Calu3 (cell line): ENCODE measurements at regions of chr1 and their contacts with region 1.

Region 1: DNA sequence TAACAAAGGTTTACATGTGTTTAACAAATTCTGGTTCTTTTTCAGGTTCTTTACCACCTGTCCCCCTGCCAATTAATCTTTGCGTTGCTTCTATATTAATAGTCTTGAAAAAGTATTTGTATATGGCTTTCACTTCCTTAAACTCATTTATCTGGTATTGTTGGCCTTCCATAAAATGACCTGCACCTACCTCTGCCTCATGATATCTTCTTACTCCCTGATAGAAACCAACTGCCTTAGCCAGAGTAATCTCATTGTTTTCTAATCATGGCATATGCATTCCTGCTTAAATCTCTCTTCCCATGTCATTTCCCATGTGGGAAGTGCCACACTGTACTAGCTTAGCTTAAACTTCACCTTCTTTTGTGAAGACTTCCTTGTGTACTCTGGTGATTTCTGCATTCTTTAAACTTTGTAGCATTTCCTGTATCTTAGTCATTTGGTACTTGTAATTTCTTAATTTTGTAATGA is 8.7 kb downstream of the SMG7 start:
- DNase-seq: no peak
- H3K4me3 Mint-ChIP-seq: peak overlapping the region; percentile 48
- H3K27ac Mint-ChIP-seq: peak overlapping the region; percentile 66
- H3K4me1 Mint-ChIP-seq: peaks cover 56% of the 10 kb centered on the region
- H3K27me3 Mint-ChIP-seq: no peaks in the 10 kb centered on the region
- CTCF ChIP-seq: no peak

Region 2: DNA sequence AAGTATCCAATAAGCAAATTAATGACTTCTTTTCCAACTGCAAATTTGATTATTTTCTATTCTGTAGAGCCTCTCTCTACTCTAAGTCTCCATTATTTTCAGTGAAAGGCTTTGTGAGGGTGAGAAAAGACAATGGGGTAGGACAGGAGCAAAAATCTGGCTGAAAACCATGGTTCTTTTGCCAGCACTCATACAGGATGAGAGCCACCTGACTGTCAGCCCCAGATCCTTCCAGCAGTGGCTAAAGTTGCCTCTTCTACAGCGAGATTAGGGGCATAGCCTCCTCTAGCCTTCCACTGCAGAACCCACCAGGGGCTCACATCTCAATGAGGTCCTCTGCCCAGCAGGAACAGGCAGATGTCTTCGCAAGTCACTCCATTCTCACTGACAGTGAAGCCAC is 86.6 kb before region 1 on chr1:
- CTCF ChIA-PET with region 1: no interaction called
- intact Hi-C with region 1: no loop called
- DNase-seq: no peak
- H3K4me3 Mint-ChIP-seq: no peak overlapping the region
- H3K27ac Mint-ChIP-seq: no peak overlapping the region
- H3K4me1 Mint-ChIP-seq: peaks cover 12% of the 10 kb centered on the region
- H3K27me3 Mint-ChIP-seq: peaks cover 52% of the 10 kb centered on the region
- CTCF ChIP-seq: no peak

Region 3: DNA sequence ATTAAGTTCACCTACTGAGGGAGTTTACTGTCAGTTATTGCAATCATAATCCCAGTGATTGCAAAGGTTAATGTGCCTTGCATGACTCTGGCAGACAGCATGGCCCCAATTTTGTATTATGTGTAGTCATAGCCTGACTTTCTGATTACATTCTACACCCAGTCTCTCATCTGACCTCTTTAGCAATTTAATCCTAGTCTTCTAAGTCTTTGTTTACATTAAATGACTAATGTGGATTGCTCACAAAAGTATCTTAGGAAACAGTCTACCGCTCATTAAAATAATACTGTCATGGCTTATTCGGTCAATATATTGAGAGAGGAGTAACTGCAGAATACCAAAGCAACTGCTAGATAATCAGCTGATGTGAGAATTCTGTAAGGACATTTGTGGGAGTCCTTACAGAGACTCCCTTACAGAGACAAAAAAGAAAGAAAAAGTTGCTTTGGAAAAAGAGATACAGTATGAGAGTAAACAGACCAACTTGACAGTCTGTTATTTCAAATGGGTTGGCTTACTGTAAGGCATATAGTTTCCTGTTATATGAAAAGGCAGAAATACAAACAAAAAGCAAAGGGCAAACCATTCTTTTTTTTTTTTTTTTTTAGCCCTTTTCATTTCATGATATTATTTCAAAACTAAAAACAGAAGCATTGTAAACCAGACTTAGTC is 34.1 kb after region 1 on chr1:
- CTCF ChIA-PET with region 1: interaction called, 3 read pairs
- intact Hi-C with region 1: loop called (anchors 5 kb)
- DNase-seq: peak; percentile 3
- H3K4me3 Mint-ChIP-seq: no peak overlapping the region
- H3K27ac Mint-ChIP-seq: peak overlapping the region; percentile 51
- H3K4me1 Mint-ChIP-seq: peaks cover 28% of the 10 kb centered on the region
- H3K27me3 Mint-ChIP-seq: no peaks in the 10 kb centered on the region
- CTCF ChIP-seq: no peak

Region 4: DNA sequence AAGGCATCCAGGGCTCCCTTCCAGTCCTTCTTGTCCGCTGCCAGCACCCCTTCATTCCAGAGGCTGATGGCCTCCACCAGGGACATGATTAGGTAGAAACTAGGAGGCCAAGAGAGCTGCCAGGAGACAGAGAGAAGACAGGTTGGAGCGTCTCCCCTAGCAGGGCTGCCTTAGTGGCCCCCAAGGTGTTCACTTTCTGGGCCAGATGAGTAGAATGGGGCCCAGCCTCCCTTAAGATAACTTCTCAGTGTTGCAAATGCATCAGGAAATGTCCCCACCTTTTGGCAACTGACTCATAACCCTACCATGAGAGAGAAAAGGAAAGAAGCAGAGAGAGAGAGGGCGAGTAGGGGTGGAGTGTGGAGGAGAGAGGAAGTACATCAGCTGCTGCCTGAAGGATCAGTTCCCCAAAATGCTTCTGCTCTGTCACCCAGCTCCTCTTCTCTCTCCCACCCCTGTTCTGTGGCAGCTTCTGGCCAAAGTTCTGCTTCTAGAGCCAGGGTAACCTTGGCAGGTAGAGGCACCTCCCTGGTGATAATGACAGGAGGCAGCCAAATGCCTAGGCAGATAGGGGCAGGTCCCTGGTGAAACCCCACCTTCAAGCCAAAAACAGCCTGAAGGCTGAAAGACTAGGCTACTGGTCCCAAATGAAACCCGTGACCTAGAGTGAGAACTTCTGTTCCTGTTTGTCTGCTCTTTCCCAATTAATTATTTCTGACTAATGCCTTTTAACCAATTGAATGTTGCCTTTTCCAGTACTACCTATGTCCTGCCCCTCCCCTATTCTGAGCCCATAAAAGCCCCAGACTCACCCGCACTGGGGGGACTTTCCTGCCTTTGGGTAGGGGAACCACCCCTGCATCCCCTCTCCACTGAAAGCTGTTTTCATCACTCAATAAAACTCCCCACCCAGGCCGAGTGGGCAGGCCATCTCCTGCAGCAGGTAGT is 109.5 kb after region 1 on chr1 and contains the start of gene NCF2:
- CTCF ChIA-PET with region 1: no interaction called
- intact Hi-C with region 1: no loop called
- DNase-seq: peak; percentile 17
- H3K4me3 Mint-ChIP-seq: no peak within 1 kb of the TSS
- H3K27ac Mint-ChIP-seq: no peak within 1 kb of the TSS
- H3K4me1 Mint-ChIP-seq: peaks cover 32% of the 10 kb centered on the region
- H3K27me3 Mint-ChIP-seq: no peaks in the 10 kb centered on the region
- CTCF ChIP-seq: no peak
- total RNA-seq, gene NCF2: 5.5 and 8.6 TPM in 2 replicates